Activated naive CD4-positive, alpha-beta T cell treated with anti-CD3 and anti-CD28 coated beads for 36 hours (primary cell): ENCODE measurements at regions of chr5 and their contacts with region 1.

Region 1: DNA sequence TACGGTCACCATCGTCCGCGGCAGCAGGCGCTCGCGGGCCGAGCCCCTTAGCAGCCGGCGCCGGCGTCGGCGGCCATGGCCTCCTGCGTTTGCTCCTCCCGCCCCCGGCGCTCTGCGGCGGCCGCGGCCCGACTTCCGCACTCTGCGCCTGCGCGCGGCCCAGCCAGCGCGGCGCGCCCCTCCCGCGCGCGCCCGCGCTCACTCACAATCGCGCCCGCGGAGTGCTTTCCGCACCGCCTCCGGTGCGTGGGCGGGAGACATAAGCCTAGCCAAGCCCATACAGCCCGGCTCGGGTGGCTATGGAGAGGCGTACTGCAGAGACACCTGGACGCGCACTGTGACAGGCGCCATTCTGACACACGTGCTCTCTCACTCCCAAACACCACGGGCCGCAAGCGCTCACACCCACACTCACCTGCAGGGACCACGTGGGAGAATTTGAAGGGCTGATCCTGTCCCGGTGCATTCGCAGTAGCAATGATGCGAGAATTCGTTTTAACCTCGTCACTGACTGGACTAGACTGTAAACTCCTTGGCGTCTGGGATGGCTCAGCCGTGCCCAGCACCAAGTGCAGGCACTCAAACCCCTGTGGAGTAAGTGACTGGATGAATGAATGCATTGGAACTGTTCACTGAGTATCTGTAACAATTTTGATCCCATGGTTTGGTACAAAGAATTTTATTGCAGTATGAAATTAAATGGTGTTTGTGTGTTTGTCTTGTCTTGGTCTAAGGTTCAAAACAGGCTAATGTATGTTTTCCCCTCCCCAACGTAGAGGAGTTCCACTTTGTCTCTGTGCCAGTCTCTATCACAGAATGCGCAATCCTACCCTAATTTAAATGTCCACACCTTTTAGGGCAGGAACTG is at the start of gene RNF145:
- DNase-seq: peak; percentile 91
- H3K4me3 Mint-ChIP-seq: peak within 1 kb of the TSS; percentile 97
- H3K27ac Mint-ChIP-seq: peak within 1 kb of the TSS; percentile 99
- H3K4me1 Mint-ChIP-seq: peaks cover 36% of the 10 kb centered on the region
- H3K27me3 Mint-ChIP-seq: no peaks in the 10 kb centered on the region
- total RNA-seq, gene RNF145: 70.0 to 75.3 TPM

Region 2: GRCh38 chr5:158938200-158938599 is 271.5 kb before region 1 on chr5:
- CTCF ChIA-PET with region 1: no interaction called
- intact Hi-C with region 1: no loop called
- DNase-seq: no peak
- H3K4me3 Mint-ChIP-seq: no peak overlapping the region
- H3K27ac Mint-ChIP-seq: no peak overlapping the region
- H3K4me1 Mint-ChIP-seq: no peaks in the 10 kb centered on the region
- H3K27me3 Mint-ChIP-seq: no peaks in the 10 kb centered on the region

Region 3: GRCh38 chr5:159100025-159100781 is 109.5 kb before region 1 on chr5:
- CTCF ChIA-PET with region 1: no interaction called
- intact Hi-C with region 1: loop called (anchors 5 kb)
- DNase-seq: peak; percentile 85
- H3K4me3 Mint-ChIP-seq: peak overlapping the region; percentile 85
- H3K27ac Mint-ChIP-seq: peak overlapping the region; percentile 55
- H3K4me1 Mint-ChIP-seq: peaks cover 34% of the 10 kb centered on the region
- H3K27me3 Mint-ChIP-seq: peaks cover 58% of the 10 kb centered on the region

Region 4: GRCh38 chr5:159178978-159179377 is 30.7 kb before region 1 on chr5:
- CTCF ChIA-PET with region 1: interaction called, 3 read pairs
- intact Hi-C with region 1: loop called (anchors 1 kb)
- DNase-seq: peak; percentile 63
- H3K4me3 Mint-ChIP-seq: no peak overlapping the region
- H3K27ac Mint-ChIP-seq: peak overlapping the region; percentile 96
- H3K4me1 Mint-ChIP-seq: peaks cover 78% of the 10 kb centered on the region
- H3K27me3 Mint-ChIP-seq: no peaks in the 10 kb centered on the region

Region 5: DNA sequence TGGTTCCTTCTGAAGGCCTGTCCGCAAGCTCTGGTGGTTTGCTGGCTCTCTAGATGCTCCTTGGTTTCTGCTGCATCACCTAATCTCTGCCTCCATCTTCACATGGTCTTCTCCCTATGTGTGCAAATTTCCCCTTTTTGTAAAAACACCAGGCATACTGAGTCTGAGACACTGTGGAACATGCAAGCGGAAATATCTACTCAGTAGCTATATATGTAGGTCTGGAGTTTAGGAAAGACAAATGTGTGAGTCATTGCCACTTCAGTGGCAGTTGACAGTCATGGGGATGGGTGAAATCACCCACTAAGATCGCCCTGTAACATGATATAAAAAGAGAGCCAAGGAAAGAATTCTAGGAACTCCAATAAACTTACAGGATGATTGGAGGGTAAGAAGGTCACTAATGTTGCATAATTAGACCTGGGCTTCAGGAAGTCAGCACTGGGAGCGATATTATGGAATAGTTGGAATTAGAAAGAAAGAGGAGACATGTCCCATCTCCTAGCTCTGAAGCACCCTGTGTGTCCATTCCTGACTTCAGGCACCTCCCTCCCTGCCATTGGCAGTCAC is 30.7 kb after region 1 on chr5:
- CTCF ChIA-PET with region 1: no interaction called
- intact Hi-C with region 1: loop called (anchors 1 kb)
- DNase-seq: peak; percentile 24
- H3K4me3 Mint-ChIP-seq: no peak overlapping the region
- H3K27ac Mint-ChIP-seq: peak overlapping the region; percentile 55
- H3K4me1 Mint-ChIP-seq: peaks cover 44% of the 10 kb centered on the region
- H3K27me3 Mint-ChIP-seq: no peaks in the 10 kb centered on the region

Region 6: GRCh38 chr5:159444441-159445082 is 234.9 kb after region 1 on chr5:
- CTCF ChIA-PET with region 1: no interaction called
- intact Hi-C with region 1: no loop called
- DNase-seq: no peak
- H3K4me3 Mint-ChIP-seq: no peak overlapping the region
- H3K27ac Mint-ChIP-seq: no peak overlapping the region
- H3K4me1 Mint-ChIP-seq: no peaks in the 10 kb centered on the region
- H3K27me3 Mint-ChIP-seq: peaks cover 6% of the 10 kb centered on the region

Region 7: DNA sequence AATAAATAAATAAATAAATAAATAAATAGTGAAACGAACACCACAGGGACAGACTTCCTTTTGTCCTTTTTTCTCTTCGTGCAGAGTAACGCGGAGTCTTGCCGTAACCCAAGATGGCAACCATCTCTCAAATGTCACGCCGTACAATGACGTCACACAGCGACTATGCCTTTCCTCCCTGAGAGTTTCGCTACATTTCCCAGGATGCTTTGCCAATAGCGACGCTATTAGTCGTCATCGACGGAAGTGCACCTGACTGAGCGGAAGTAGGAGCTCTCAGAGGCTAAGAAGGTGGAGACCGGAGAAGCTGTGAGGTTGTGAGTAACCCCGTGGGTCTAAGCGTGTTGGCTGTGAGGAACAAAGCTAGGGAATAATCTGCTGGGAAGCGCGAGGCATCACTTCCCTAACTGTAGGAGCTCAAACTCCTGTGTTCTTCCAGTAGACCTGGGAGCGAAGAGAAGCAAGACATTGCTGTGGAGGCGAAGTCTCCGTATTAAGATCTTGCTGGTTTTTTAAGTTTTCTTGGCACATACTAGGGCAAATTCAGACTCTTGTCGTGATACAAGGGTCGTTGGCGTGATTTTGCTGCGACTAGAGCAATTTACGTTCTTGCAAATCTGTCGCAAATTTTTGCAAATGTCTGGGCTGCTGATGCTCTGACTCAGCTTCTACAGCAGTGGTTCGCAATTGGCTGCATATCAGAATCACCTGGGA is 799.4 kb after region 1 on chr5 and contains the start of gene TTC1:
- CTCF ChIA-PET with region 1: no interaction called
- intact Hi-C with region 1: loop called (anchors 1 kb)
- DNase-seq: peak; percentile 98
- H3K4me3 Mint-ChIP-seq: peak within 1 kb of the TSS; percentile 98
- H3K27ac Mint-ChIP-seq: peak within 1 kb of the TSS; percentile 94
- H3K4me1 Mint-ChIP-seq: peaks cover 27% of the 10 kb centered on the region
- H3K27me3 Mint-ChIP-seq: no peaks in the 10 kb centered on the region
- total RNA-seq, gene TTC1: 46.0 to 47.1 TPM